Activated naive CD4-positive, alpha-beta T cell treated with anti-CD3 and anti-CD28 coated beads for 36 hours (primary cell): ENCODE measurements at regions of chr12 and their contacts with region 1.

Region 1: GRCh38 chr12:31832740-31833729 is 104.2 kb upstream of the AMN1 start:
- DNase-seq: peak; percentile 63
- H3K4me3 Mint-ChIP-seq: no peak overlapping the region
- H3K27ac Mint-ChIP-seq: peak overlapping the region; percentile 89
- H3K4me1 Mint-ChIP-seq: peaks cover 46% of the 10 kb centered on the region
- H3K27me3 Mint-ChIP-seq: no peaks in the 10 kb centered on the region

Region 2: DNA sequence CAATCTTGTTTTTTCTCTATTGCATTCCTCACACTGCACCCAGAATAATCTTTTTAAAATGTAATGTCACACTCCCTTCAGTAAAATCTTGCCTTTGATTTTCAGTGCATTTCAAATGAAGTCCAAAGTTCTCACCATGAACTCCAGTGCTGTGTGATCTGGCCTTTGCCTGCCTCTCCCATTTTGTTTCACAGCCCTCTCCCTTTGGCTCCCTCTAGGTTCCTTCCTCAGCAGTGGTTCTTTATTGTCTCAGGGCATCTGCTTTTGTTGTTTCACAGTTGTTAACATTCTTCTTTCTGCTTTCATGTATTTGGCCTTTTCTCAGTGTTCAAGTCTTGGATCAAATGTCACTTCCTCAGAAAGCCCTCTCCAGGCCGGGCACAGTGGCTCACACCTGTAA is 19.7 kb before region 1 on chr12:
- CTCF ChIA-PET with region 1: no interaction called
- intact Hi-C with region 1: loop called (anchors 2 kb)
- DNase-seq: no peak
- H3K4me3 Mint-ChIP-seq: no peak overlapping the region
- H3K27ac Mint-ChIP-seq: no peak overlapping the region
- H3K4me1 Mint-ChIP-seq: peaks cover 18% of the 10 kb centered on the region
- H3K27me3 Mint-ChIP-seq: no peaks in the 10 kb centered on the region